ENCODE measurements at regions of chr11 and their contacts with region 1.

Region 1: GRCh38 chr11:12195768-12196167 is 85.4 kb downstream of the MICAL2 start:
- DNase-seq: peak in 8 of 9 donors; percentile 55 to 77 (median 70)
- ATAC-seq: peak; percentile 83
- H3K4me3 ChIP-seq: peak overlapping the region; percentile 41
- H3K4me3 Mint-ChIP-seq: peak overlapping the region; percentile 68 to 92 (median 81)
- H3K27ac ChIP-seq: peak overlapping the region; percentile 57
- H3K27ac Mint-ChIP-seq: peak overlapping the region; percentile 91 to 97 (median 94)
- H3K4me1 ChIP-seq: peaks cover 40 to 58% of the 10 kb centered on the region in 2 donors
- H3K4me1 Mint-ChIP-seq: peaks cover 50 to 89% (median 75%) of the 10 kb centered on the region in 7 donors
- H3K27me3 ChIP-seq: no peaks in the 10 kb centered on the region
- H3K27me3 Mint-ChIP-seq: no peaks in the 10 kb centered on the region

Region 2: GRCh38 chr11:11931461-11932055 is 264.2 kb before region 1 on chr11:
- CTCF ChIA-PET with region 1: no interaction called
- POLR2A ChIA-PET with region 1: no interaction called
- intact Hi-C with region 1: no loop called
- DNase-seq: peak in 7 of 9 donors; percentile 7 to 45 (median 31)
- ATAC-seq: peak; percentile 75
- H3K4me3 ChIP-seq: no peak overlapping the region
- H3K4me3 Mint-ChIP-seq: no peak overlapping the region
- H3K27ac ChIP-seq: no peak overlapping the region
- H3K27ac Mint-ChIP-seq: no peak overlapping the region
- H3K4me1 ChIP-seq: no peaks in the 10 kb centered on the region
- H3K4me1 Mint-ChIP-seq: peaks cover 4 to 11% (median 8%) of the 10 kb centered on the region in 7 donors
- H3K27me3 ChIP-seq: no peaks in the 10 kb centered on the region
- H3K27me3 Mint-ChIP-seq: no peaks in the 10 kb centered on the region

Region 3: GRCh38 chr11:12144330-12145180 is 51.2 kb before region 1 on chr11:
- CTCF ChIA-PET with region 1: no interaction called
- POLR2A ChIA-PET with region 1: interaction called, 3 read pairs
- intact Hi-C with region 1: loop called in 1 of 2 experiments (anchors 5 kb)
- DNase-seq: no peak
- ATAC-seq: no peak
- H3K4me3 ChIP-seq: no peak overlapping the region
- H3K4me3 Mint-ChIP-seq: peak overlapping the region in 9 of 10 donors; percentile 26 to 82 (median 57)
- H3K27ac ChIP-seq: no peak overlapping the region
- H3K27ac Mint-ChIP-seq: peak overlapping the region; percentile 48 to 94 (median 73)
- H3K4me1 ChIP-seq: peaks cover 2 to 50% of the 10 kb centered on the region in 2 donors
- H3K4me1 Mint-ChIP-seq: peaks cover 40 to 86% (median 65%) of the 10 kb centered on the region in 7 donors
- H3K27me3 ChIP-seq: no peaks in the 10 kb centered on the region
- H3K27me3 Mint-ChIP-seq: no peaks in the 10 kb centered on the region

Region 4: DNA sequence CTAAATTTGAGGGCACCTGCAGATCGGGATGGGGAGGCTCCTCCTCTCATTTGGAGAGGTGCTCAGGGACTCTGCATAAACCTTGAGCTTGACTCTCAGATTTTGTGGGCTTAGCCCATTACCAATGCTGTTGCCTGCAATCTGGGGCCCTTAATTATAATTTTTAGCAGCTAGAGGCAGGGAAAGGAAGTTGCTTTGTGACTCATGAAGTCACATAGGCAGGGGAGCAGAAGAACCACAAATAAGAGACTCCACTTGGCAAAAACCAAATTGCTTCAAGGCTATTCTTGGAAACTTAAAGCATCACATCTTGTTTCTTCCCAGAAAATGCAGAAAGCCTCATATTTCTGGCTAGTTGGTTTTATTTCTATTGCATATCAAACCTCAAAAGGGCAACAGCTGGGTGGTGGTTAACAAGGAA is 38.5 kb before region 1 on chr11:
- CTCF ChIA-PET with region 1: no interaction called
- POLR2A ChIA-PET with region 1: interaction called, 5 read pairs
- intact Hi-C with region 1: loop called in 1 of 2 experiments (anchors 1 kb)
- DNase-seq: no peak
- ATAC-seq: peak; percentile 36
- H3K4me3 ChIP-seq: no peak overlapping the region
- H3K4me3 Mint-ChIP-seq: peak overlapping the region in 2 of 10 donors; percentile 23 to 51
- H3K27ac ChIP-seq: no peak overlapping the region
- H3K27ac Mint-ChIP-seq: peak overlapping the region in 5 of 9 donors; percentile 15 to 86 (median 46)
- H3K4me1 ChIP-seq: peaks cover 15% of the 10 kb centered on the region in 2 donors
- H3K4me1 Mint-ChIP-seq: peaks cover 15 to 87% (median 22%) of the 10 kb centered on the region in 7 donors
- H3K27me3 ChIP-seq: no peaks in the 10 kb centered on the region
- H3K27me3 Mint-ChIP-seq: no peaks in the 10 kb centered on the region

Region 5: GRCh38 chr11:12224537-12224893 is 28.7 kb after region 1 on chr11:
- CTCF ChIA-PET with region 1: interaction called, 3 read pairs
- POLR2A ChIA-PET with region 1: interaction called, 17 read pairs
- intact Hi-C with region 1: loop called (anchors 1 kb)
- DNase-seq: peak; percentile 55 to 86 (median 81)
- ATAC-seq: peak; percentile 97
- H3K4me3 ChIP-seq: peak overlapping the region; percentile 52
- H3K4me3 Mint-ChIP-seq: peak overlapping the region; percentile 67 to 91 (median 75)
- H3K27ac ChIP-seq: peak overlapping the region; percentile 54
- H3K27ac Mint-ChIP-seq: peak overlapping the region; percentile 87 to 97 (median 91)
- H3K4me1 ChIP-seq: peaks cover 36 to 41% of the 10 kb centered on the region in 2 donors
- H3K4me1 Mint-ChIP-seq: peaks cover 33 to 51% (median 47%) of the 10 kb centered on the region in 7 donors
- H3K27me3 ChIP-seq: no peaks in the 10 kb centered on the region
- H3K27me3 Mint-ChIP-seq: no peaks in the 10 kb centered on the region

Region 6: DNA sequence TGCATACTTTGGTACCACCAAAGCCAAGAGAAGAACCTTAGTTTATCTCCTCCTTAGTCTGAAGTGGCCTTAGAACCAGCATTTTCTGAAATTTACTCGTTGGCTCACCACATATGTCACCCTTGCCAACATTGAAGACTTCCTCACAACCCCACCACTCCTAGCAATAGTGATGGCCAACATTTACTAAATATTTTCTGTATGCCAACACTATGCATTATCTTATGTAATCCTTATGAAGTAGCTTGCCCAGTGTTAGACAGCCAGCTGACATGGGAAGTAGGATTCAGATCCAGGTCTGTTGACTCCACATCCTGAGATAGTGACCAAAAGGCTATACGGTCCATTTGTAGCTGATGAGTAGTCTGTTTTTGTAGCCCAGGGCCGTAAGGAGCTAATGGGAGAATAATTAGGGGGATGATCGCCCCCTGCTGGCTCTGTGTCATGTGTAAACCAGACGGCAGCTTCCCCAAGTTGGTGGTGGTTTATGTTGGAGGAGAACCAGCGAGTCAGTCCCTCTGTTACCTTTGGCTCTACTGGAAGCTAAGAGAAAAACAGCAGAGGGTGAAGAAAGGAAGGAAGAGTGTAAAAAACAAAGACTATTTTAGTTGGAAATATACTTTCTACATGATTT is 692.9 kb after region 1 on chr11:
- CTCF ChIA-PET with region 1: no interaction called
- POLR2A ChIA-PET with region 1: no interaction called
- intact Hi-C with region 1: no loop called
- DNase-seq: peak; percentile 28 to 60 (median 52)
- ATAC-seq: peak; percentile 63
- H3K4me3 ChIP-seq: no peak overlapping the region
- H3K4me3 Mint-ChIP-seq: no peak overlapping the region
- H3K27ac ChIP-seq: no peak overlapping the region
- H3K27ac Mint-ChIP-seq: no peak overlapping the region
- H3K4me1 ChIP-seq: no peaks in the 10 kb centered on the region
- H3K4me1 Mint-ChIP-seq: peaks cover 0 to 4% (median 0%) of the 10 kb centered on the region in 7 donors
- H3K27me3 ChIP-seq: no peaks in the 10 kb centered on the region
- H3K27me3 Mint-ChIP-seq: peaks cover 8 to 15% (median 13%) of the 10 kb centered on the region in 5 donors